ENCODE measurements at regions of chr3 and their contacts with region 1.

Region 1: GRCh38 chr3:111071257-111072015 is at the start of gene NECTIN3:
- DNase-seq: peak; percentile 67 to 96
- H3K4me3 ChIP-seq: peak within 1 kb of the TSS; percentile 95
- H3K27ac ChIP-seq: peak within 1 kb of the TSS; percentile 94 to 98
- H3K4me1 ChIP-seq: peaks cover 0 to 6% of the 10 kb centered on the region in 2 donors
- H3K27me3 ChIP-seq: no peaks in the 10 kb centered on the region
- CTCF ChIP-seq: no peak
- total RNA-seq, gene NECTIN3: 104 TPM

Region 2: DNA sequence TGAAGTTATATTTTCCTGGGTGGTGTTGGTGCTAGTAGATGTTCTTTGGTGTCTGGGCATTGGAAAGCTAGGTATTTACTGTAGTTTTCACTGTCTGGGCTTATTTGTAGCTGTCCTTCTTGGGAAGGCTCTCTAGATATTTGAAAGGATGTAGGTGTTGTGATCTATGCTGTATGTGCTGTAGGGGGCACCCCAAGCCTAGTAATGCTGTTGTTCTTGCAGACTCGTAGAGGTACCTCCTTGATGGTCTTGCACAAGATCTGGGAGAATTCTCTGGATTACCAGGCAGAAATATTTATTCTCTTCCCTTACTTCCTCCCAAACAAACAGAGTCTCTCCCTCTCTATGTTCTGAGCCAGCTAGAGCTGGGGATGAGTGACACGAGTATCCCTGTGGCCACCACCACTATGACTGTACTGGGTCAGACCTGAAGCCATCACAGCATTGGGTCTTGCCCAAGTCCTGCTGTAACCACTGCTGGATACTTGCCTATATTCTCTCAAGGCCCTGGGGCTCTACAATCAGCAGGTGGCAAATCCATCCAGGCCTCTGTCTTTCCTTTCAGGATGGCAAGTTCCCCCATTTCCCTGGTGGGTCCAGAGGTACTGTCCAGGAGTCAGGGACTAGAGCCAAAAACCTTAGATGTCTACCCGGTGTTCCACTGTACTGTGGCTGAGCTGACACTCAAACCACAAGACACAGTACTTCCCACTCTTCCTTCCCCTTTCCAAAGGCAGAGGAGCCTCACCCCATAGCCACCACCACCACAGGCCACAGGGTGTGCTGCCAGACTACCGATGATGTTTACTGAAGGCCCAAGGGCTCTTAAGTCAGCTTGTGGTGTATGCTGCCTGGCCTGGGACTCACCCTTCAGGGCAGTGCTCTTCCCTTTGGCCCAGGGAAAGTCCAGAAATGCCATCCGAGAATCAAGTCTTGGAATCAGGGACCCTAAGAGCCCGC is 1538.9 kb before region 1 on chr3:
- intact Hi-C with region 1: loop called (anchors 10 kb)
- DNase-seq: peak in 1 of 2 donors; percentile 67
- H3K4me3 ChIP-seq: no peak overlapping the region
- H3K27ac ChIP-seq: no peak overlapping the region
- H3K4me1 ChIP-seq: no peaks in the 10 kb centered on the region
- H3K27me3 ChIP-seq: no peaks in the 10 kb centered on the region
- CTCF ChIP-seq: peak; percentile 15 to 56 (median 27)

Region 3: GRCh38 chr3:109685084-109686079 is 1386.1 kb before region 1 on chr3:
- intact Hi-C with region 1: loop called (anchors 2 kb)
- DNase-seq: peak; percentile 91 to 98
- H3K4me3 ChIP-seq: peak overlapping the region in 1 of 2 donors; percentile 9
- H3K27ac ChIP-seq: peak overlapping the region; percentile 75 to 76
- H3K4me1 ChIP-seq: peaks cover 0 to 6% of the 10 kb centered on the region in 2 donors
- H3K27me3 ChIP-seq: no peaks in the 10 kb centered on the region
- CTCF ChIP-seq: no peak

Region 4: GRCh38 chr3:109927161-109927560 is 1144.3 kb before region 1 on chr3:
- intact Hi-C with region 1: loop called (anchors 5 kb)
- DNase-seq: no peak
- H3K4me3 ChIP-seq: no peak overlapping the region
- H3K27ac ChIP-seq: no peak overlapping the region
- H3K4me1 ChIP-seq: no peaks in the 10 kb centered on the region
- H3K27me3 ChIP-seq: no peaks in the 10 kb centered on the region
- CTCF ChIP-seq: no peak

Region 5: DNA sequence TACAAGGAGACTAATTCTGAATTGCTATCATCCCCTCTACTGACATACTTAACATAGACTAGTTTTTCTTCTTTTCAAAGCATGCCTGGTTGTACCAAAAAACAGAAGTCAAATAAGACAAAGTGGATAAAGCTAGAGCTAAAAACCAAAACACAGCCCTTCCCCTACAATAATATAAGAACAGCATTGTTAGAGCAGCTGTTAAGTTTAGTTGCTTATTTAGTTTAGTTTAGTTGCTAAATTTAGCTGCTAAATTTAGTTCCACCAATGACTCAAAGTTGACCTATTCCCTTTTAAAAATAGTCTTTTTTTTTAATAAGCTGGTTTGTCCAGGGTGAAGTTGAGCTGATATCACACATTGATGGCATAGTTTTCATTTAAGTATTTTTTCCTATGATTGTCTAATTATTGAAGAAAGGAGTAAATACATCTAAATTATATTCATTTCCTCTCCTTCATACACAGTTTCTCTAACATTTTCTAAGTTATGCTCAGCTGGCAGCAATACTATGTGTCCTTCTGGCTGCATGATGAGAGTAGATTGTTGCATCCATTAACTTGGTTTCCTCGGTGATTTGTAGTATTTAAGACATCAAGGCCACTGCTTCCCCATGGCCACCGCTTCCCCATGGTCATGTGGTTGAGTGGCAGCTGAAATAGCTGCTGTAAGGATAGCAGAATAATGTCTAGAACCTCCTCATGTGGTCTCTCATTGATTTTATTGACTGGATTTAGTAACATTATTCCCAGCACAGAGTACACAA is 718.4 kb before region 1 on chr3:
- intact Hi-C with region 1: loop called (anchors 5 kb)
- DNase-seq: no peak
- H3K4me3 ChIP-seq: no peak overlapping the region
- H3K27ac ChIP-seq: peak overlapping the region; percentile 20 to 62
- H3K4me1 ChIP-seq: peaks cover 2 to 8% of the 10 kb centered on the region in 2 donors
- H3K27me3 ChIP-seq: no peaks in the 10 kb centered on the region
- CTCF ChIP-seq: no peak

Region 6: DNA sequence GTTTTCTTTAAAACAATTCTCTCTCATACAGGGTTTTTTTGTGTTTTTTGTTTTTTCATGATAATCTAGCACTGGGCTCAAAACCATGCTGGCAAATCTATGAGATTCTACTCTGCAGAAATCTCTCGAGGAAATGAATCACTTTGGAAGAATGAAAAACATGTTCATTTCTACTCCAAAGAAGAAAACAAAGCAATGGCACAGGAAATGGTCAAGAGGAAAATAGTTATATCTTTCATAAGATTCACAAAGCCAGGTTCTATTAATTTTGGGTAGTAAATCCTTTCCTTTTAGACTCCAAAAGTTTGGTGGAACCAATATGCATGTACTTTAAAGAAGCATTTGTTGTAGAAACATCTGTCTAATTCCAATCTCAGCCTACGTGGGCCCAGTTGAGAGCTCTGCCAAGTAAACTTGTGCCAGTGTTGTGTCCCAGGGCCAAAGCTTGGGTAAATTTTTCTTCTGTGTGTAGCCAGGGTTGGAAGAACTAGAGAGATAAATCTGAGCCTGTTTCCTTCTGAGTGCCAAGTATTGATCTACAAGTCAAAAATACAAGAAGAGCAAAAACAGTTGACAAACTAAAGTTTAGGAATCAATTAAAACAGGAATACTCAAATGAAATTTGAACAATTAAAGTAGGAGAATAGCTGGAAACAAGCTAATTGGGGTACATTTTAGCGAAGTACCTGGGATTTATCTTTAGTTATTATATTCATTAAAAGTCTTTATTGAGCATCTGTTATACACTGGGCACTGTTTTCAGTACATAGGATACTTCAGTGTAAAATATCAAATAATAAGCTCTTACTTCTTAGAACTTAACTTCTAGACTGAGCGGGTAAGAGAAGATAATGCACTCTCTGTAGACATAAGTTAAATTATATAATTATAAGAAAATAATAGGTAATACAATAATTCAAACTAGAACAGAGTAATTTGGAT is 657.4 kb before region 1 on chr3:
- intact Hi-C with region 1: loop called (anchors 5 kb)
- DNase-seq: peak in 1 of 2 donors; percentile 63
- H3K4me3 ChIP-seq: no peak overlapping the region
- H3K27ac ChIP-seq: peak overlapping the region; percentile 71 to 83
- H3K4me1 ChIP-seq: peaks cover 0 to 18% of the 10 kb centered on the region in 2 donors
- H3K27me3 ChIP-seq: no peaks in the 10 kb centered on the region
- CTCF ChIP-seq: no peak